ENCODE measurements at regions of chr17 and their contacts with region 1.

Region 1: DNA sequence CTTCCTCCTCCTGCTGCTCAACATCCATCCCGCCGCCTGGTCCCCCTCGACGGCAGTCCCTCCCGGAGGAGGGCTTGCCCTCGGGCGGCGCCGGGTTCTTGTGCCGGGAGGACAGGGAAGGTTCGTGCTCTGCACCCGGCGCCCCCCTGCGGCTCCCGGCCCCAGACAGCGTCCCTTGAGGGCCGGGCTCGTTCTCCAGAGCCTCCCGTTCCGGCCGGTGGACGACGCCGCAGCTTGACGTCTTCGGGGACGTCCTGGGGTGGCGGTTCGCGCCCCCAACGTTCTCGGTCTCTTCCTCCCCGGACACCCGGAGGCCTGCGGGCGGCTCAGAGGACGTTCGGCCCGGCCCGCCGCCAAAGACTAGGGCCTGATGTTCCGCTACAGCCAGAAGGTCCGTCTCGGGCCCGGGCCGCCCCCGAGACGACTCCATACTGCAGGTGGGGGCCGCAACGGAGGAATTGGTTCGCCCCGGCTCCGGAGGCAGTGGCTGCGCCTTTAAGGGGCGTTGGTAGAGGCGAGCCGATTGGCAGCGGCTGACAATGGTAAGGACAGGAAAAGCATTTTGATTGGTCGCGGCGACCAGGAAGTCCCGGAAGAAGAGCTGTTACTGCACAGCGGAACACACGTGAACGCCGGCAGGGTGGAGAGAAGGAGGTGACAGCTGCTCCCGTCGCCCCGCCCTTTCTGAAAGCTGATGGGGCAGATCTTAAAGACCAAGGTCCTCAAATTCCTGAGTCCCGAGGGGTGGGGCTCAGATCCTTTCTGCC is at the start of gene BORCS6:
- DNase-seq: peak; percentile 72 to 97 (median 82)
- ATAC-seq: peak; percentile 80
- H3K4me3 ChIP-seq: peak within 1 kb of the TSS; percentile 88
- H3K27ac ChIP-seq: peak within 1 kb of the TSS; percentile 85
- H3K4me1 ChIP-seq: peaks cover 31 to 39% of the 10 kb centered on the region in 2 experiments
- H3K27me3 ChIP-seq: no peaks in the 10 kb centered on the region
- CTCF ChIP-seq: peak in 1 of 3 experiments; percentile 0; a peak in 1 of 6 replicates
- EP300 ChIP-seq: no peak
- POLR2A ChIP-seq: peak; percentile 73
- RAD21 ChIP-seq: no peak
- polyA plus RNA-seq, gene BORCS6: 0.01 to 0.08 TPM

Region 2: DNA sequence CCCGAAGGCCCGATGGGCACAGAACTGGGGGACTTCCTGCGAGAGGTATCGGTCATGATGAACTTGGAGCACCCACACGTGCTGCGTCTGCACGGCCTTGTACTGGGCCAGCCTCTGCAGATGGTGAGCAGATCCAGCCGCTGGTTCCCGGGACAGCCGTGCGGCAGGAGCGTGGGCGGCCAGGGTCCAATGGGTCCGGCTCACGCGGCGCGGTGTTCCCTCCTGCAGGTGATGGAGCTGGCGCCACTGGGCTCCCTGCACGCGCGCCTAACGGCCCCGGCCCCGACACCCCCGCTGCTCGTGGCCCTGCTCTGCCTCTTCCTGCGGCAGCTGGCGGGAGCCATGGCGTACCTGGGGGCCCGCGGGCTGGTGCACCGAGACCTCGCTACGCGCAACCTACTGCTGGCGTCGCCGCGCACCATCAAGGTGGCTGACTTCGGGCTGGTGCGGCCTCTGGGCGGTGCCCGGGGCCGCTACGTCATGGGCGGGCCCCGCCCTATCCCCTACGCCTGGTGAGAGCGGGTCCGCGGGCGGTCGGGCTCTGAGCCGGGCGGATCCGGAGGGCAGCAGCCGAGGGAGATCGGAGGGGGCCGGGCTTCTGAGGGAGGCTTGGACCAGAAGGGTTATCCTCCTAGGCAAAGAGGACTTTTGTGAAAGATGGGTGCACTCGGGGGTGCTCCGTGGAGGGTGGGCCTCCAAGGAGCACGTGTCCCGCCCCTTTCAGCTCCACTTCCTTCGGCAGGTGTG is 806.0 kb before region 1 on chr17:
- CTCF ChIA-PET with region 1: no interaction called
- POLR2A ChIA-PET with region 1: no interaction called
- in situ Hi-C with region 1: no loop called
- intact Hi-C with region 1: no loop called
- DNase-seq: no peak
- ATAC-seq: no peak
- H3K4me3 ChIP-seq: no peak overlapping the region
- H3K27ac ChIP-seq: no peak overlapping the region
- H3K4me1 ChIP-seq: peaks cover 8 to 18% of the 10 kb centered on the region in 2 experiments; a peak in 4 of 5 replicates
- H3K27me3 ChIP-seq: no peaks in the 10 kb centered on the region
- CTCF ChIP-seq: no peak
- EP300 ChIP-seq: no peak
- POLR2A ChIP-seq: no peak
- RAD21 ChIP-seq: no peak

Region 3: DNA sequence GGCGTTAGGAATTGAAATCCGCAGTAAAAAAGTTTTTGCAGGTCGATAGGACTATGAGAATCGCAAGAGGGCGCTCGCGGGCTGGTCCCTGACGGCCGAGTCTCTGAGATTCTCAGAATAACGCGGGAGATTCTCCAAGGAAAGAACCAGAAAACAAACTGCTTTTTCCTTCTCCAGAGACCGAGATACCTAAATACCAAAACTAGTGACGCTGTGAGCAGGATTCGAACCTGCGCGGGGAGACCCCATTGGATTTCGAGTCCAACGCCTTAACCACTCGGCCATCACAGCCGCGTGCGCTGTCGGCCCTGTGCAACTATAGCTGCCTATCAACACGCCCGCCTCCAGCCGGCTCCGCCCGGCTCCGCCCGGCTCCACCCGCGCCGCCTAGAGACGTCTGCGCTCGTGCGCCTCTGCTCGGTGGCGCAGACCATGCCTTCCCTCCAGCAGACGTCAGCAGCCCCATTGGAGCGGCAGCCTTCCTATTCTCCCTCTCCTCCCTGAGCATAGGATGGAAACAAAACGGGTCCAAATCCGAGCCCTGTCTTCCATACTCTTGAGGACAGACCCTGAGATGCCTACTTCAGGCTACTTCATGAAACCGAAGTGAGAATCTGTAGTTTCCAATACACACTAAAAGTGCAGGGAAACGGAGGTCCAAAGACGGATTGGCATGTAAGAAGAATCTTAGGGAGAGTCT is 51.1 kb before region 1 on chr17:
- CTCF ChIA-PET with region 1: interaction called, 4 read pairs
- POLR2A ChIA-PET with region 1: no interaction called
- in situ Hi-C with region 1: no loop called
- intact Hi-C with region 1: loop called (anchors 2 kb)
- DNase-seq: peak; percentile 73 to 94 (median 77)
- ATAC-seq: peak; percentile 95
- H3K4me3 ChIP-seq: peak overlapping the region; percentile 59
- H3K27ac ChIP-seq: peak overlapping the region; percentile 95
- H3K4me1 ChIP-seq: peaks cover 6 to 28% of the 10 kb centered on the region in 2 experiments; a peak in 4 of 5 replicates
- H3K27me3 ChIP-seq: no peaks in the 10 kb centered on the region
- CTCF ChIP-seq: peak; percentile 84 to 98 (median 96)
- EP300 ChIP-seq: peak; percentile 42; the same call in 1 of the 2 replicates
- POLR2A ChIP-seq: no peak; the same call in 1 of the 2 replicates
- RAD21 ChIP-seq: peak; percentile 75 to 77

Region 4: GRCh38 chr17:8209909-8210760 is 20.2 kb after region 1 on chr17 and contains the start of gene AURKB:
- CTCF ChIA-PET with region 1: no interaction called
- POLR2A ChIA-PET with region 1: interaction called, 30 read pairs
- in situ Hi-C with region 1: no loop called
- intact Hi-C with region 1: loop called (anchors 1 kb)
- DNase-seq: peak; percentile 85 to 95 (median 88)
- ATAC-seq: peak; percentile 92
- H3K4me3 ChIP-seq: peak within 1 kb of the TSS; percentile 73
- H3K27ac ChIP-seq: peak within 1 kb of the TSS; percentile 94
- H3K4me1 ChIP-seq: peaks cover 17 to 25% of the 10 kb centered on the region in 2 experiments; a peak in 4 of 5 replicates
- H3K27me3 ChIP-seq: no peaks in the 10 kb centered on the region
- CTCF ChIP-seq: no peak
- EP300 ChIP-seq: no peak
- POLR2A ChIP-seq: peak; percentile 95
- RAD21 ChIP-seq: no peak
- polyA plus RNA-seq, gene AURKB: 63.4 to 101 TPM

Region 5: GRCh38 chr17:8248751-8249607 is 59.1 kb after region 1 on chr17 and contains the start of gene PFAS:
- CTCF ChIA-PET with region 1: no interaction called
- POLR2A ChIA-PET with region 1: interaction called, 4 read pairs
- in situ Hi-C with region 1: no loop called
- intact Hi-C with region 1: loop called (anchors 2 kb)
- DNase-seq: peak; percentile 85 to 95 (median 87)
- ATAC-seq: peak; percentile 72
- H3K4me3 ChIP-seq: peak within 1 kb of the TSS; percentile 96
- H3K27ac ChIP-seq: peak within 1 kb of the TSS; percentile 98
- H3K4me1 ChIP-seq: peaks cover 2 to 5% of the 10 kb centered on the region in 2 experiments; a peak in 3 of 5 replicates
- H3K27me3 ChIP-seq: no peaks in the 10 kb centered on the region
- CTCF ChIP-seq: 0 out of 6 replicates have a peak, but pooled peaks of 1 of the 3 experiments have one; percentile 0
- EP300 ChIP-seq: no peak
- POLR2A ChIP-seq: peak; percentile 80
- RAD21 ChIP-seq: no peak
- polyA plus RNA-seq, gene PFAS: 11.6 to 18.2 TPM

Measured in K562 (cell line).